ENCODE measurements at regions of chr6 and their contacts with region 1.

Region 1: GRCh38 chr6:38012573-38012972 is 193.0 kb downstream of the ZFAND3 start:
- DNase-seq: no peak
- H3K4me3 ChIP-seq: no peak overlapping the region
- H3K27me3 ChIP-seq: no peaks in the 10 kb centered on the region
- CTCF ChIP-seq: peak; percentile 66

Region 2: GRCh38 chr6:37396476-37397180 is 615.9 kb before region 1 on chr6:
- CTCF ChIA-PET with region 1: no interaction called
- POLR2A ChIA-PET with region 1: interaction called, 11 read pairs
- DNase-seq: peak; percentile 9
- H3K4me3 ChIP-seq: no peak overlapping the region
- H3K27me3 ChIP-seq: 0 out of 2 replicates have a peak, but pooled peaks cover 2% of the 10 kb centered on the region
- CTCF ChIP-seq: no peak

Measured in BJ (cell line).